Transverse colon (tissue), 4 donors: ENCODE measurements at regions of chr15 and their contacts with region 1.

Region 1: DNA sequence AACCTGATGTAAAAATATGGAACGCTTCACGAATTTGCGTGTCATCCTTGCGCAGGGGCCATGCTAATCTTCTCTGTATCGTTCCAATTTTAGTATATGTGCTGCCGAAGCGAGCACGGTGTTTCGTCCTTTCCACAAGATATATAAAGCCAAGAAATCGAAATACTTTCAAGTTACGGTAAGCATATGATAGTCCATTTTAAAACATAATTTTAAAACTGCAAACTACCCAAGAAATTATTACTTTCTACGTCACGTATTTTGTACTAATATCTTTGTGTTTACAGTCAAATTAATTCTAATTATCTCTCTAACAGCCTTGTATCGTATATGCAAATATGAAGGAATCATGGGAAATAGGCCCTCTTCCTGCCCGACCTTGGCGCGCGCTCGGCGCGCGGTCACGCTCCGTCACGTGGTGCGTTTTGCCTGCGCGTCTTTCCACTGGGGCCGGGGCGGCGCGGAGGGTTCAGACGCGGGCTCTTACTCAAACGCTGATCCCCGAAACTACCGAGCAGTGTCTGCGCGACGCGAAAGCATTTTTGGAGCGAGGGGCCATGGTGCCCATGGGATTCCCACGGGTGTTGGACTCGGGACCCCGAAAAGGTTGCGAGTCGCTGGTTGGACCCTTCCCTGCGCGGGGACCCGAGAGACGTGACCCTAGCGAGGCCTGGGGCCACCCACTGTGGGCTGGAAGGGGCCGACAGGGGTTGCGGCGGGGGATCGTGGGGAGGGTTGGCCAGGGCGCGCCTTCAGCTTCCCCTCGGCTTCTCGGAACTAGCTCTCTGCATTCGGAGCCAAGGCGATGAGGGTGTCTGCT is at the start of gene RNU6-1:
- DNase-seq: peak; percentile 94
- H3K4me3 ChIP-seq: peak within 1 kb of the TSS; percentile 80 to 94 (median 90)
- H3K27ac ChIP-seq: peak within 1 kb of the TSS; percentile 97 to 100 (median 98)
- H3K4me1 ChIP-seq: peaks cover 12 to 35% (median 29%) of the 10 kb centered on the region in 4 donors
- H3K27me3 ChIP-seq: peaks cover 11% of the 10 kb centered on the region
- CTCF ChIP-seq: no peak
- EP300 ChIP-seq: no peak
- POLR2A ChIP-seq: peak; percentile 86
- total RNA-seq, gene RNU6-1: not detected

Region 2: GRCh38 chr15:66946578-66947164 is 893.5 kb before region 1 on chr15:
- in situ Hi-C with region 1: loop called in 1 of 4 experiments (anchors 25 kb)
- intact Hi-C with region 1: no loop called
- DNase-seq: peak; percentile 78
- H3K4me3 ChIP-seq: no peak overlapping the region
- H3K27ac ChIP-seq: no peak overlapping the region
- H3K4me1 ChIP-seq: peaks cover 0 to 15% (median 0%) of the 10 kb centered on the region in 4 donors
- H3K27me3 ChIP-seq: no peaks in the 10 kb centered on the region
- CTCF ChIP-seq: peak; percentile 90 to 94 (median 93)
- EP300 ChIP-seq: no peak
- POLR2A ChIP-seq: no peak

Region 3: GRCh38 chr15:67456677-67457529 is 383.2 kb before region 1 on chr15:
- in situ Hi-C with region 1: loop called in 2 of 4 experiments (anchors 10 kb)
- intact Hi-C with region 1: loop called (anchors 10 kb)
- DNase-seq: peak; percentile 86
- H3K4me3 ChIP-seq: no peak overlapping the region
- H3K27ac ChIP-seq: no peak overlapping the region
- H3K4me1 ChIP-seq: no peaks in the 10 kb centered on the region
- H3K27me3 ChIP-seq: no peaks in the 10 kb centered on the region
- CTCF ChIP-seq: peak; percentile 81 to 90 (median 87)
- EP300 ChIP-seq: no peak
- POLR2A ChIP-seq: no peak

Region 4: GRCh38 chr15:67468416-67468815 is 371.7 kb before region 1 on chr15:
- in situ Hi-C with region 1: loop called in 1 of 4 experiments (anchors 10 kb)
- intact Hi-C with region 1: loop called (anchors 10 kb)
- DNase-seq: no peak
- H3K4me3 ChIP-seq: no peak overlapping the region
- H3K27ac ChIP-seq: no peak overlapping the region
- H3K4me1 ChIP-seq: no peaks in the 10 kb centered on the region
- H3K27me3 ChIP-seq: no peaks in the 10 kb centered on the region
- CTCF ChIP-seq: no peak
- EP300 ChIP-seq: no peak
- POLR2A ChIP-seq: no peak

Region 5: DNA sequence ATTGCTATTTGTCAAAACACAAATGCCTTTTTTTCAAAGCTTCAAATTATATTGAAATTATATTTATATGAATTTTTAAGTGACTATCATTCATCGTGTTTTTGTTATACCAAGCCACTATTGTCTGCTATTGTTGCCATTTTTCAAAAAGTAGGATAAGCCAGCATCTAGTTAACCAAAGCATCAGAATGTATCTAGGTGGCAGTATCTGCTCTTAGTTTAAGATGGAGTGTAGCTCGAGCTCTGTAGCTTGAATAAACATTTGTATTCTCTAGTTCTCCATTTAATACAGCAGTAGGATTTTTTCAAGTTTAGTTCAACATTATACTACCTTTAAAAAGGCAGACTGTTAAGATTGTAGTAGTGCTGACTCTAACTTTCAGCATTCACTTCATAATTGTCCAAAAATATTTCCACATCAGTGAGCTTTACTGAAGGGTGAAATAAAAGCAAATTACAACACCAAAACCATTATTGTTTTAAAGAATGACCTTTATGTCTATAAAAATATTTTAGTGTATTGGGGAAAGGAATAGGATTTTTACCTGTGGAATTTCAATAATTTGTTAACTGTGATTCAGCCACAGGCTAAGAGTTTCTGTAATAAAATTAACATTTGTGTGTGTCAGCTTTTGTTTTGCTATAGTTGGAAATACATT is 338.8 kb before region 1 on chr15:
- in situ Hi-C with region 1: loop called in 1 of 4 experiments (anchors 10 kb)
- intact Hi-C with region 1: no loop called
- DNase-seq: no peak
- H3K4me3 ChIP-seq: no peak overlapping the region
- H3K27ac ChIP-seq: no peak overlapping the region
- H3K4me1 ChIP-seq: no peaks in the 10 kb centered on the region
- H3K27me3 ChIP-seq: no peaks in the 10 kb centered on the region
- CTCF ChIP-seq: peak in 3 of 5 experiments; percentile 4 to 21 (median 21)
- EP300 ChIP-seq: no peak
- POLR2A ChIP-seq: no peak

Region 6: DNA sequence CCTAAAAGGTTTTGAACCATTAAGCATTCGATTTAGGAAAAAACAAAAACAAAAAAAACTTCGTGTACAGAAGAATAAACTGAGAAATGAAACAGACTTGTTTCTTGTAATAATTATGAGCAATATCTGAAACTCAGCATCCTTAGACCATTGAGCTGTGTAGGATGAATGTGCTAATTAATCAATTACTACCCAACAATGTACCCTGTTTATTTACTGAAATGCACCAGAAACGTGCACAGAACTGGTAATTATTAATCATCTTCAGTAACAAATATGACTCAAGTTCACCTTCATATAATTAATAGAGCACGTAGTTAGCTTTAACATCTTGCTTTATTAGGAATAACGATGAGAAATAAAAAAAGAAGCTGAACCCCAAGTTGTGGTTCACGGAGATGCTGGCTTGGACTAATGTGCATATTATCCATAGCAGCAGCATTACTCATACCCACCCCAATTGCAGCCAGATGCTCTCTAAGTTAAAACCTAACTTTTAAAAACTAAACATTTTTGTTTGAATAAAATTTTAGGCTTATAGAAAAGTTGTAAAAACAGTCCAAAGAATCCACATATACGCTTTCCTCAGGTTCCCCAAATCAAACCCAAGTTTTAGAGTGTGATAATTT is 329.4 kb before region 1 on chr15:
- in situ Hi-C with region 1: loop called in 2 of 4 experiments (anchors 10 kb)
- intact Hi-C with region 1: no loop called
- DNase-seq: no peak
- H3K4me3 ChIP-seq: no peak overlapping the region
- H3K27ac ChIP-seq: no peak overlapping the region
- H3K4me1 ChIP-seq: no peaks in the 10 kb centered on the region
- H3K27me3 ChIP-seq: no peaks in the 10 kb centered on the region
- CTCF ChIP-seq: no peak
- EP300 ChIP-seq: no peak
- POLR2A ChIP-seq: no peak

Region 7: GRCh38 chr15:67660874-67661606 is 179.1 kb before region 1 on chr15:
- in situ Hi-C with region 1: no loop called
- intact Hi-C with region 1: no loop called
- DNase-seq: no peak
- H3K4me3 ChIP-seq: no peak overlapping the region
- H3K27ac ChIP-seq: no peak overlapping the region
- H3K4me1 ChIP-seq: no peaks in the 10 kb centered on the region
- H3K27me3 ChIP-seq: no peaks in the 10 kb centered on the region
- CTCF ChIP-seq: no peak
- EP300 ChIP-seq: no peak
- POLR2A ChIP-seq: no peak

Region 8: DNA sequence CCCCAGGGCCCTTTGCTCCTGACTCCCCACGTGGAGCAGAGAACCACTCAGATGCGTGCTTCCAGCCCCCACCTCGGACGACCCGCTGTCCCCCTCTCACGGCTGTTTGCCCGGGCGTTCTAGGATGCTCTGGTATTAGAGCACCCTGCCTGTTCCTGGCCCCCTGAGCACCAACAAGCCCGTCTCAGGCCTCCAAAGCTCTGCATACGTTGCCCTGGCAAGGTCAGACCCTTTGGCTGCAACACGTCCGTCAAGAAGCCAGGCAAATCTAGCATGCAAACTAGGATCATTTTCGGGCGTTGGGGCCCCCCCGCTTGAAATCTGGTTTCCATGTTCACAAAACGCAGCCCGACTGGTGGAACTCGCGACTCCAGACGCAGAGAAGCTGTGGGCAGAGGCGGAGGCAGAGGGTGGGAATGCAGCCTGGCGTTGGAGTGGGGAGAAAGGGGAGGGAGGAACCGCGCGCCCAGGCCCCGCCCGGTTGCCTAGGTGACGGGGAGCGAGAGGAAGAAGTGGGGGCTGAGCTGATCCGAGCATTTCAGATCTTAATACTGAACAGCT is 127.8 kb after region 1 on chr15:
- in situ Hi-C with region 1: no loop called
- intact Hi-C with region 1: no loop called
- DNase-seq: peak; percentile 76
- H3K4me3 ChIP-seq: peak overlapping the region in 3 of 4 donors; percentile 26 to 43 (median 28)
- H3K27ac ChIP-seq: peak overlapping the region in 3 of 4 donors; percentile 38 to 67 (median 47)
- H3K4me1 ChIP-seq: peaks cover 0 to 16% (median 15%) of the 10 kb centered on the region in 4 donors
- H3K27me3 ChIP-seq: no peaks in the 10 kb centered on the region
- CTCF ChIP-seq: no peak
- EP300 ChIP-seq: no peak
- POLR2A ChIP-seq: no peak